Caco-2 (cell line): ENCODE measurements at regions of chr17 and their contacts with region 1.

Region 1: DNA sequence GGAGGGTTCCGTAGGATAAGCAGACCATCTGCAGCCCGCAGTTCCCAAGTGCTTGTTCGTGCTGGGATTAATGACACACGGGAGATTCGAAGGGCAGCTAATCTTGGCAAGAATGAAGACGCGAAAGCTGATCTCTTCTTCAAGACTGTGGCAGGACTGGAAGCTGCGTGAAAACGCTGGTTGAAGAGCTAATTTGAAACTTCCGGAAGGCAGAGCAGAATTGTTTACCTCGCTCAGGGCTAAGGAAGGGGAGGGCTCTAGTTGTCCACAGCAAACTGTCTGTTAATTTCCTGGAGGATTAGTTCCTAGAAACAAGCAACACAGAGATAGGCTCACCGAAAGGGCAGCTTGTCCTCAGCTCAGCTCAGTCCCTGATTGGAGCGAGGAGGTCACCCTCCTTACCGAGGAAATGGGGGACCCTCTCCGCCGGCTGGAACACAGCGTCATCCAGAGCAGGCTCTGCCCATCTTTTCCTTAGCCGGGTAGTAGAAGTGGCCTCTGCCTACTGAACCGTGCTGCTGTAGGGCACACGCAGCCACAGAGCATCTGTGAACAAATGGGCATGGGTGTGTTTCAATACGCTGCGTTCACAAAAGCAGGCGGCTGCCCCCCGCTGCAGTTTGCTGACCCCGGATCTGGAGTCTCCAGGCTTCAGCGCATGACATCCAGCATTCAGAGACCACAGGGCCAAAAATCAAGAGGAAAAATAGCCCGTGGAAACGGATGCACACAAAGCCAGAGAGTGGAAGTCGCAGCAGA is 16.7 kb upstream of the BAIAP2 start:
- DNase-seq: no peak
- H3K4me3 ChIP-seq: no peak overlapping the region
- H3K4me3 Mint-ChIP-seq: no peak overlapping the region
- H3K27ac Mint-ChIP-seq: no peak overlapping the region
- H3K4me1 ChIP-seq: no peaks in the 10 kb centered on the region; the same call in 1 of the 2 replicates
- H3K4me1 Mint-ChIP-seq: no peaks in the 10 kb centered on the region
- H3K27me3 ChIP-seq: no peaks in the 10 kb centered on the region
- H3K27me3 Mint-ChIP-seq: peaks cover 3% of the 10 kb centered on the region
- CTCF ChIP-seq: no peak

Region 2: DNA sequence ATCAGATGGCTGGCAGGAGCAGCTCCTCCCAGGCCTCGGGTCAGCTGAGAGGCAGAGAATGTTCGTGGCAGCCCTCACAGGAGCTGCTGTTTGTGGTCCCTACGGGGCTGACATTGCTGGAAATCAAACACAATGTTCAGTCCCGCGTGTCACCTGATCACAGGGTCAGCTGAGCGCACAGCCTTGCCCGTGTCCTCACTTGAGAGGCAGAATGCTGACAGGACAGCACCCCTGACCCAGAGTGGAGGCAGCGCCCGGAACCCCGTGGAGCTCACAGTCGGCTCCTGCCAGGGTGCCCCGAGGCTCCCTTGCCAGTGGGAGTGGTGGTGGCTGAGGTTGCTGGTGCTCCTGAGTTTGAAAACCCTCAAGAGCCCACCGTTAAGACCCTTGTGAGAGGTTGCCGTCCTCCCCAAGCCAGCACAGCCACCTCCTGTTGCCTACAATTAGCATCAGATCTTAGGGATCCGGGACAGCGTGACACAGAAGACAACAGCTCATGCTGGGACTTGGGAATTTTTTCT is 30.2 kb before region 1 on chr17:
- CTCF ChIA-PET with region 1: interaction called, 5 read pairs
- POLR2A ChIA-PET with region 1: no interaction called
- intact Hi-C with region 1: loop called (anchors 1 kb)
- DNase-seq: no peak
- H3K4me3 ChIP-seq: no peak overlapping the region
- H3K4me3 Mint-ChIP-seq: no peak overlapping the region
- H3K27ac Mint-ChIP-seq: no peak overlapping the region
- H3K4me1 ChIP-seq: peaks cover 13% of the 10 kb centered on the region
- H3K4me1 Mint-ChIP-seq: no peaks in the 10 kb centered on the region
- H3K27me3 ChIP-seq: no peaks in the 10 kb centered on the region
- H3K27me3 Mint-ChIP-seq: no peaks in the 10 kb centered on the region
- CTCF ChIP-seq: no peak

Region 3: DNA sequence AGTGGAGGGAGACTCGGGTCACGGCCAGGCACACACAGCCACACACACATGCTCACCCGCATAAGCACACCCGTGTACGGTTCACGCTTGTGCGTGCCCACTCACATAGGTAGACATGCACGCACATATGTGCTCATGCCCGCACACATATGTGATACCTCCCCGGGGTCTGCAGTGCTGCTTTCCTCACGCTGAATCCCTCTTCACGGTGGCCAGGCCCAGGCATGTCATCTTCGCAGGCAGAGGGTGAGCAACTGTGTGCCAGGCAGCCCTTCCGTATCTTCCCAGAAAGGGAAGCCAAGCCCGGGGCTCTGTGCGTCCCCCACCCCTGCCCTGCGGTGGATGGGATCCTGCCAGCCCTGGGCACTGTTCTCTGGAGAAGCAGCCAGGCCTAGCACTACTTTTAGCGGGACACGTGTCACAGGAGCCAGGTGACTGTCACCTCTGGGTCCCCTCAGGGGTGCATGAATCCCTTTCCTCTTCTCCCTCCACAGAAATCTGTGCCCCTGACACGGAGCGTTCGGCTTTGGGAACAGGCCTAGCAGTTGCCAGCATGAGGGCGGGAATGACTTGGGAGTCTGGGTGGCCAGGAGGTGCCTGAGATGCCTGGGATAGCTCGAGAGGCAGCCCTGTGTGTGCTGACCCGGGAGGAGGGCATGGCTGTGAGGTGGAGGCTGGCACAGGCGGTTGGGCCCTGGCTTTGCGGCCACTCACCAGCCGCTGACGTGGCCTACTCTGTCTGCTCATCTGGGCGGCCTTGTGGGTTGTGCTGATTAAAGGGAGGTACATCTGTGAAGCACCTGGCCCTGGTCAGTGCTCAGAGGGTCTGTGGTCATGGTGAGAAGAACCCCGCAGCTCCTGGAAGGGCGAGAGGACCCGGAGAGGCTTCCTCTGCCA is 64.2 kb after region 1 on chr17:
- CTCF ChIA-PET with region 1: no interaction called
- POLR2A ChIA-PET with region 1: no interaction called
- intact Hi-C with region 1: no loop called
- DNase-seq: no peak
- H3K4me3 ChIP-seq: no peak overlapping the region
- H3K4me3 Mint-ChIP-seq: no peak overlapping the region
- H3K27ac Mint-ChIP-seq: no peak overlapping the region
- H3K4me1 ChIP-seq: no peaks in the 10 kb centered on the region
- H3K4me1 Mint-ChIP-seq: no peaks in the 10 kb centered on the region
- H3K27me3 ChIP-seq: no peaks in the 10 kb centered on the region
- H3K27me3 Mint-ChIP-seq: no peaks in the 10 kb centered on the region
- CTCF ChIP-seq: no peak

Region 4: GRCh38 chr17:81101614-81102306 is 83.5 kb after region 1 on chr17:
- CTCF ChIA-PET with region 1: no interaction called
- POLR2A ChIA-PET with region 1: no interaction called
- intact Hi-C with region 1: loop called (anchors 5 kb)
- DNase-seq: peak; percentile 88 to 94
- H3K4me3 ChIP-seq: no peak overlapping the region
- H3K4me3 Mint-ChIP-seq: no peak overlapping the region
- H3K27ac Mint-ChIP-seq: peak overlapping the region; percentile 59
- H3K4me1 ChIP-seq: no peaks in the 10 kb centered on the region; the same call in 1 of the 2 replicates
- H3K4me1 Mint-ChIP-seq: no peaks in the 10 kb centered on the region
- H3K27me3 ChIP-seq: no peaks in the 10 kb centered on the region
- H3K27me3 Mint-ChIP-seq: no peaks in the 10 kb centered on the region
- CTCF ChIP-seq: peak; percentile 99 to 100